Dorsolateral prefrontal cortex (tissue), 120 donors: ENCODE measurements at regions of chr13 and their contacts with region 1.

Region 1: GRCh38 chr13:46119883-46120614 is 15.2 kb upstream of the CPB2 start:
- DNase-seq: no peak
- H3K4me3 ChIP-seq: no peak overlapping the region
- H3K27ac ChIP-seq: peak overlapping the region in 34 of 59 donors; percentile 3 to 94 (median 84)
- H3K27me3 ChIP-seq: no peaks in the 10 kb centered on the region
- CTCF ChIP-seq: no peak

Region 2: DNA sequence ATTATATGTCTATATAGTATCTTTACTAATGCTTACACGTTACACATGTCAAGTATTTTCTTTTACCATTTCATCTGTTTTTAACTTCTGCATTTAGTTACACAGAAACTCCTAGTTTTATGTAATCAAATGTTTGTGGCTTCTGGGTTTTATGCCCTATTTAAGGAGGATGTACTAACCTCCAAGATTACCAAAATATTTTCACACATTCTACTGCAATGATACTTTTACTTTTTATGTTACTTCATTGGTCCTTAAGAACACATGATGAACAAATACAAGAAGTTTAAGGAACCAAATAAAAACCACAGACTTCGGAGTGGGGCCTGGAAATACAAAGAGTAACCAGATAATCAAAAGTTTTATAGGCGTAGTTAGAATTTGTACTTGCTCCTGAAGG is 104.7 kb before region 1 on chr13:
- intact Hi-C with region 1: loop called in 1 of 2 experiments (anchors 5 kb)
- DNase-seq: no peak
- H3K4me3 ChIP-seq: no peak overlapping the region
- H3K27ac ChIP-seq: no peak overlapping the region
- H3K27me3 ChIP-seq: no peaks in the 10 kb centered on the region
- CTCF ChIP-seq: no peak

Region 3: GRCh38 chr13:46052319-46053161 is 67.5 kb before region 1 on chr13 and contains the start of gene ZC3H13:
- intact Hi-C with region 1: loop called in 1 of 2 experiments (anchors 5 kb)
- DNase-seq: peak; percentile 94 to 98 (median 96)
- H3K4me3 ChIP-seq: peak within 1 kb of the TSS; percentile 62 to 99 (median 90)
- H3K27ac ChIP-seq: peak within 1 kb of the TSS; percentile 29 to 97 (median 92)
- H3K27me3 ChIP-seq: no peaks in the 10 kb centered on the region
- CTCF ChIP-seq: peak; percentile 25 to 81 (median 64)
- total RNA-seq, gene ZC3H13: 64.3 to 130 (median 93.6) TPM